Activated T-helper 2 cell treated with anti-CD3 and anti-CD28 coated beads, Interferon-gamma antibody, Interleukin-2, Interleukin-4, amounts not matched to agents 10 μg/mL and 5 μg/mL and 100 μg/mL, durations not matched to agents 14 hours and 24 hours and 36 hours (primary cell): ENCODE measurements at regions of chr9 and their contacts with region 1.

Region 1: DNA sequence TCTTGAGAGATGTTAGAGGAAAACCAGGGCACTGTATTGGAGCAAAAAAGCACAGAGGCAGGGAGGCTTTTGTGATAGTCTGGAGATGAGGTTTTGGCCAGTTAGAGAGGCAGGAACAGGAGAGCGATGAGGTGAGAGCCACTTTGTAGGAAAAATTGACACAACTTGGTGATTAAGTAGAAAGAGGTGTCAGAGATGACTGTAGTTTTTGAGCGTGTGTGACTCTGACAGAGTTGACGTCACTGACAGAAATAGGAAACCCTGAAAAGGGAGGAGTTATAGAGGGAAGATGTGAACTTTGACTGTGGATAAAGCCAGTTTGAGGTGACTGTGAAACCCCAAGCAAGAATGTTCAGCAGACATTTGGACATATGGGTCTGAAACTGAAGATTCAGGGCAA is 15.7 kb downstream of the NFX1 start:
- DNase-seq: no peak
- H3K4me3 Mint-ChIP-seq: no peak overlapping the region
- H3K27ac Mint-ChIP-seq: no peak overlapping the region
- H3K4me1 Mint-ChIP-seq: peaks cover 31% of the 10 kb centered on the region
- H3K27me3 Mint-ChIP-seq: no peaks in the 10 kb centered on the region

Region 2: DNA sequence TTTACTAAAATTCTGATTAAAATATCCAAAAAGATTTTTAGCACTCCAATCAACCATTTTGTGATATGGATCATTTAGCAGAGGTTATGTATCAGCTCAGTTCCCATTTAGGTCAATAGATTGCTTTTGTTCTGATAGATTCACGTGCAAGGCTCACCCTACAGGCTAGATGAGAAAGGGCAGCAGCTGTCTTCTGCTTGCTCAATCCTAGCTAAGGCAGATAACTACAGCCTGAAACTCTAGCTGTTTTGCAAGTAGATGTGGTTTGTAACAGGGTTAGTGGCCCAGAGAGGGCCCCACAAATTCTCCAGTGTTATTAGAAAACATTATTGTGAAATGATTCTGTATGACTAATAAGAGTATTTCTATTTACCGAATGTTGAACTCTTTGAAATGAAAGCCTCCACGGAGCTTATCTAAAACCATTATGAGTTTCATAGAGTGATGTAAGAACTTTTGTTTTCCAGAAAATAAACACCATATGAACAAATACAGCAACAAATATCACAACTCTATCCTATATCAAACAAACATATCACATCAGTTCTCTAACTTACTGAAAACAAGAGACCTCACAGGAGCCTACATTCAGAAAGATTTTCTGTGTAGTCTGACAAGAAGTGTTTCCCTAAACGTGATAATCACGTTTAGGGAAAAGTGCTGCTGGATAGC is 1763.5 kb before region 1 on chr9:
- intact Hi-C with region 1: no loop called
- DNase-seq: peak; percentile 11
- H3K4me3 Mint-ChIP-seq: no peak overlapping the region
- H3K27ac Mint-ChIP-seq: peak overlapping the region; percentile 39
- H3K4me1 Mint-ChIP-seq: peaks cover 18% of the 10 kb centered on the region
- H3K27me3 Mint-ChIP-seq: no peaks in the 10 kb centered on the region

Region 3: DNA sequence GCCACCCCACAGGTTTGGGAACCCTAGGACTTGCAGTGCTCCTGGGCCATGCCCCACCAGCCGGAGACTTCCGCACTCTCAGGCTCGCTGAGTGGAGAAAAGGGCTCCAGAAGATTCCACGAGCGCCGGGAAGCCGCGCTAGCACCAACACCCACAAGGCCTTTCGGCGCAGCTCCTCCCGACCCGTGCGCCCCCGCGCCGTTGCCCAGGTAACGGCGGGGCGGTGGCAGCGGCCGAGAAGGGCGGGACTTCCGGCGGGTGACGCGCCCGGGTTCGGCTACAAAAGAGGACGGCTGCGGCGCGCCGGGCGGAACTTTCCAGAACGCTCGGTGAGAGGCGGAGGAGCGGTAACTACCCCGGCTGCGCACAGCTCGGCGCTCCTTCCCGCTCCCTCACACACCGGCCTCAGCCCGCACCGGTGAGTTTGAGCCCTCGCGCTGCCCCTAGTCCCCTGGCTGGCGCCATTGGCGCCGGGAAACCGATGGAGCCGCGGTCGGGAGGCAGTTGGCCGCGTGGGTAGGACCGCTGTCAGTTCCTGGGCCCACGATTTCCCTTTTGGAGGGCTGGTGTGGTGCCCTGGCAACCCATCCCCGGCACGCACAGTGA is 281.0 kb before region 1 on chr9 and contains the start of gene DNAJA1:
- intact Hi-C with region 1: loop called (anchors 1 kb)
- DNase-seq: peak; percentile 93
- H3K4me3 Mint-ChIP-seq: peak within 1 kb of the TSS; percentile 90
- H3K27ac Mint-ChIP-seq: peak within 1 kb of the TSS; percentile 96
- H3K4me1 Mint-ChIP-seq: peaks cover 53% of the 10 kb centered on the region
- H3K27me3 Mint-ChIP-seq: no peaks in the 10 kb centered on the region
- total RNA-seq, gene DNAJA1: 257 and 259 TPM in 2 replicates

Region 4: GRCh38 chr9:33264473-33265177 is 41.4 kb before region 1 on chr9 and contains the starts of genes BAG1 and CHMP5:
- intact Hi-C with region 1: loop called (anchors 1 kb)
- DNase-seq: peak; percentile 100
- H3K4me3 Mint-ChIP-seq: peak within 1 kb of the TSS; percentile 98
- H3K27ac Mint-ChIP-seq: peak within 1 kb of the TSS; percentile 96
- H3K4me1 Mint-ChIP-seq: peaks cover 43% of the 10 kb centered on the region
- H3K27me3 Mint-ChIP-seq: no peaks in the 10 kb centered on the region
- total RNA-seq, gene BAG1: 62.0 and 68.9 TPM in 2 replicates
- total RNA-seq, gene CHMP5: 54.5 and 57.6 TPM in 2 replicates

Region 5: GRCh38 chr9:33295571-33295970 is 10.5 kb before region 1 on chr9:
- intact Hi-C with region 1: loop called (anchors 1 kb)
- DNase-seq: no peak
- H3K4me3 Mint-ChIP-seq: peak overlapping the region; percentile 53
- H3K27ac Mint-ChIP-seq: peak overlapping the region; percentile 81
- H3K4me1 Mint-ChIP-seq: peaks cover 71% of the 10 kb centered on the region
- H3K27me3 Mint-ChIP-seq: no peaks in the 10 kb centered on the region

Region 6: GRCh38 chr9:33320568-33321261 is 14.7 kb after region 1 on chr9:
- intact Hi-C with region 1: loop called (anchors 1 kb)
- DNase-seq: no peak
- H3K4me3 Mint-ChIP-seq: no peak overlapping the region
- H3K27ac Mint-ChIP-seq: peak overlapping the region; percentile 69
- H3K4me1 Mint-ChIP-seq: peaks cover 11% of the 10 kb centered on the region
- H3K27me3 Mint-ChIP-seq: no peaks in the 10 kb centered on the region

Region 7: DNA sequence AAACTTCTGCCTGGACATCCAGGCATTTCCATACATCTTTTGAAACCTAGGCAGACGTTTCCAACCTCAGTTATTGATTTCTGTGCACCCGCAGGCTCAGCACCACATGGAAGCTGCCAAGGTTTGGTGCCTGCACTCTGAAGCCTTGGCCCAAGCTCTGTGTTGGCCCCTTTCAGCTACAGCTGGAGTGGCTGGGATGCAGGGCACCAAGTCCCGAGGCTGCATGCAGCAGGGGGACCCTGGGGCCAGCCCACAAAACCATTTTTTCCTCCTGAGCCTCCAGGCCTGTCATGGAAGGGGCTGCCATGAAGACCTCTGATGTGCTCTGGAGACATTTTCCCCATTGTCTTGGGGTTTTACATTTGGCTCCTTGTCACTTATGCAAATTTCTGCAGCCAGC is 34.1 kb after region 1 on chr9:
- intact Hi-C with region 1: loop called (anchors 5 kb)
- DNase-seq: no peak
- H3K4me3 Mint-ChIP-seq: no peak overlapping the region
- H3K27ac Mint-ChIP-seq: no peak overlapping the region
- H3K4me1 Mint-ChIP-seq: peaks cover 7% of the 10 kb centered on the region
- H3K27me3 Mint-ChIP-seq: no peaks in the 10 kb centered on the region

Region 8: GRCh38 chr9:33415501-33416038 is 109.5 kb after region 1 on chr9:
- intact Hi-C with region 1: no loop called
- DNase-seq: peak; percentile 93
- H3K4me3 Mint-ChIP-seq: no peak overlapping the region
- H3K27ac Mint-ChIP-seq: peak overlapping the region; percentile 92
- H3K4me1 Mint-ChIP-seq: peaks cover 34% of the 10 kb centered on the region
- H3K27me3 Mint-ChIP-seq: peaks cover 4% of the 10 kb centered on the region